Activated CD4-positive, alpha-beta T cell treated with anti-CD3 and anti-CD28 coated beads for 36 hours (primary cell): ENCODE measurements at regions of chr12 and their contacts with region 1.

Region 1: GRCh38 chr12:107760809-107761501 is at the start of gene PRDM4:
- DNase-seq: peak; percentile 95
- ATAC-seq: peak; percentile 93
- H3K4me3 Mint-ChIP-seq: peak within 1 kb of the TSS; percentile 92
- H3K27ac Mint-ChIP-seq: peak within 1 kb of the TSS; percentile 91
- H3K4me1 Mint-ChIP-seq: peaks cover 27% of the 10 kb centered on the region
- H3K27me3 Mint-ChIP-seq: no peaks in the 10 kb centered on the region
- total RNA-seq, gene PRDM4: 27.5 to 29.7 TPM

Region 2: DNA sequence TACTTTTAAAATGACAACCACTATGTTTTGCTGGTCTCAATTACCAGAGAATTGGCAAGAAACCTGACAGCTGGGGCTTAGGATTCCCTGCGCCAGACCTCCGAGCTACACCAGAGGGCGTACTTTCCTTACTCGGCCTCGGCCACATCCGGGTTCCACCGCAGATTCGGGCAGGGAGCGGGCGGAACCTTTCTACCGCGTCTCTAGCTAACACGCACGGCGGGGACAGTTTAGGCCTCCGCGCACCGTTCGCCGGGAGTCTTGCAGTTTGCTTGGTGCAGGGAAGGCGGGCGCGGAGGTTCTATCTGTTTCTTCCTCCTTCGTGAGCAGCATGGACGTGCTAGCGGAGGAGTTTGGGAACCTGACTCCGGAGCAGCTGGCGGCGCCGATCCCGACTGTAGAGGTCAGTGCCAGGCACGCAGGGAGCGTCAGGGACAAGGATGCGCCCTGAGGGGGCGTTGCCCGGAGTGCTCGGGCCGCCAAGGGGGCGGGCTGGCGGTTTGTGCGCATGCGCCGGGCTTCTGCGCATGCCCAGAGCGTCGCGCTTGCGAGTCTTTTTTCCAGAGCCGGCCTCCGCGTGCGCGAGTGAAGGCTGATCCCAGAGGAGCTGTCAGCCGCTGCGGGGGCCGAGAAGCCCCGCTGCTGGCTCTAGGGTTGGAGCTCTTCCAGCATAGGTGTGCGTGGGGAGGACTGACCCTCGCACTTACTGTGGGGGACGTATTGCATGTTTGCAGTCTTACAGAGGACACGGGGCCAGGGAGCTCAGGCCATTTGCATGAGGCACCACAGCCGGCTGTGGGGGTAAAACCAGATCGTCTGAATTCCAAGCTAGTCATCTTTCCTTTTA is 1403.2 kb before region 1 on chr12 and contains the start of gene POLR3B:
- CTCF ChIA-PET with region 1: no interaction called
- POLR2A ChIA-PET with region 1: no interaction called
- intact Hi-C with region 1: loop called in 1 of 2 experiments (anchors 5 kb)
- DNase-seq: peak; percentile 98
- ATAC-seq: peak; percentile 95
- H3K4me3 Mint-ChIP-seq: peak within 1 kb of the TSS; percentile 92
- H3K27ac Mint-ChIP-seq: peak within 1 kb of the TSS; percentile 92
- H3K4me1 Mint-ChIP-seq: peaks cover 14% of the 10 kb centered on the region
- H3K27me3 Mint-ChIP-seq: no peaks in the 10 kb centered on the region
- total RNA-seq, gene POLR3B: 9.1 to 11.7 TPM

Region 3: DNA sequence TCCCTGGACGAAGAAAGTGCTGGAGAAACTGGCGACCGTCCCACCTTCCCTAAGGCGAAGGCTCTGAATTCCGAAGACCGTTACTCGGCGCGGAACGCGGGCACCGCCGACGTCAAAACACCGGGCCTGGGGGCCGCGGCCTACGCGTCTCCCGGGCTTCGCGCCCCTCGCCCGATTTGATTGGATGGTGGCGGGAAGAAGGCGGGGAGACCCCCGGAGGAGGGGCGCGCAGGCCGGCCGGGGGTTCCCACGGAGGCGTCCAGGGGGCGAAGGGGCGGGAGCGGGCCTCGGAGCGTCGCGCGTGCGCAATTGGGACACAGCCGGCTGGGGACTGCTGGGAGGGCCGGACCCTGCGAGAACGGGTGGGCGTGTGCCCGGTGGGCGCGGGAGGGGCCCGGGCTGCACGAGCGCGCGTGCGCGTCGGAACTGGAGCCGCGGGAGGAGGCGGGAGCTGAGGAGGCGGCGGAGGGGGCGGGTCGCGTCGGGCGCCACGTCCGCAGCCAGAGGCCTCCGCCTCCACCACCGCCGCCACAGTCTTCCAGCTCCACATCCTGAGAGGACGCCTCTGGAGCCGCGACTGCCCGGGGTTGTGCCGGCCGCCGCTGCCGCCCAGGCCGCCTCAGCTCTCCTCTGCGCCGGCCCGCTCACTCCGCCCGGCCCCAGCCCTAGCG is 805.4 kb before region 1 on chr12 and contains the start of gene TMEM263:
- CTCF ChIA-PET with region 1: no interaction called
- POLR2A ChIA-PET with region 1: no interaction called
- intact Hi-C with region 1: loop called in 1 of 2 experiments (anchors 1 kb)
- DNase-seq: peak; percentile 94
- ATAC-seq: peak; percentile 81
- H3K4me3 Mint-ChIP-seq: peak within 1 kb of the TSS; percentile 100
- H3K27ac Mint-ChIP-seq: peak within 1 kb of the TSS; percentile 98
- H3K4me1 Mint-ChIP-seq: peaks cover 23% of the 10 kb centered on the region
- H3K27me3 Mint-ChIP-seq: no peaks in the 10 kb centered on the region
- total RNA-seq, gene TMEM263: 38.9 to 43.0 TPM

Region 4: DNA sequence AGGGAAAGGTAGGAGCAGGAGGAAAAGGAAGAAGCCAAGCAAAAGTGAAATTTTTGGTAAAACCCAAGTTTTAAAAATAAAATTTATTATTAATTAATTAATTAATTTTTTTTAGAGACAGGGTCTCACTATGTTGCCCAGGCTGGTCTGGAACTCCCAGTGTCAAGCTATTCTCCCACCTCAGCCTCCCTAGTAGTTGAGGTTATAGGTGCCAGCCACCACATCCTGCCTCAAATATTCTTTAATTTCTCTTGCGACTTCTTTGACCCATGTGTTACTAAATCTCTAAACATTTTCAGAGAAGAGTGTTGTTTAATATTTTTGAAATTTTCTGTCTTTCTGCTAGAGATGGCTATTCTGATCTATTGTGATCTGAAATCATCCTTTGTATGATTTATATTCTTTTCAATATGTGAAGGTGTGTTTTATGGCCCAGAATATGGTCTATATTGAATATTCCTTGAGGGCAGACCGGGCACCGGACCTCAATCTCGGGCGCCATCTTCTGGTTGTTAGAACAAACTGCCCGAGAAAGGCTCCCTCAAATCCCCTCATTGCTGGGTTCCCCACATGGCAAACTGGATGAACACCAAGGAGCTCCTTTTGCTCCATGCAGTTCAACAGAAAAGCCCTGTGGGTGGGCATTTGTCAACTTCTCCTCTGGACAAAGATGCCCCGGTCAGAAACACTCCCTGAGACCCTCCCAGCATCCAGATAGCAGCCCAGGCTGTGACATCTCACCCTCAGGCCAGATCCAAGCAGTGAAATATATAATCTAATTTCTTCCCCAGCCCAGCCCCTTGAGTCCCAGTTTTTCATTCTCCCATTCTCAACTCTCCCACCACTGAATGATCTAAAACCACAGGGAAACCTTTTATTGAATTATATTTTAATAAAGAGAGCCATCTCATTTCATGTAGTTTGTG is 124.1 kb after region 1 on chr12:
- CTCF ChIA-PET with region 1: interaction called, 3 read pairs
- POLR2A ChIA-PET with region 1: no interaction called
- intact Hi-C with region 1: loop called (anchors 1 to 2 kb)
- DNase-seq: peak; percentile 71
- ATAC-seq: peak; percentile 76
- H3K4me3 Mint-ChIP-seq: no peak overlapping the region
- H3K27ac Mint-ChIP-seq: no peak overlapping the region
- H3K4me1 Mint-ChIP-seq: no peaks in the 10 kb centered on the region
- H3K27me3 Mint-ChIP-seq: peaks cover 4% of the 10 kb centered on the region

Region 5: GRCh38 chr12:107912421-107913004 is 151.6 kb after region 1 on chr12:
- CTCF ChIA-PET with region 1: interaction called, 12 read pairs
- POLR2A ChIA-PET with region 1: no interaction called
- intact Hi-C with region 1: no loop called
- DNase-seq: peak; percentile 85
- ATAC-seq: peak; percentile 92
- H3K4me3 Mint-ChIP-seq: peak overlapping the region; percentile 64
- H3K27ac Mint-ChIP-seq: no peak overlapping the region
- H3K4me1 Mint-ChIP-seq: peaks cover 3% of the 10 kb centered on the region
- H3K27me3 Mint-ChIP-seq: peaks cover 31% of the 10 kb centered on the region

Region 6: GRCh38 chr12:108270035-108270848 is 509.3 kb after region 1 on chr12:
- CTCF ChIA-PET with region 1: no interaction called
- POLR2A ChIA-PET with region 1: no interaction called
- intact Hi-C with region 1: no loop called
- DNase-seq: no peak
- ATAC-seq: no peak
- H3K4me3 Mint-ChIP-seq: no peak overlapping the region
- H3K27ac Mint-ChIP-seq: no peak overlapping the region
- H3K4me1 Mint-ChIP-seq: no peaks in the 10 kb centered on the region
- H3K27me3 Mint-ChIP-seq: peaks cover 8% of the 10 kb centered on the region

Region 7: DNA sequence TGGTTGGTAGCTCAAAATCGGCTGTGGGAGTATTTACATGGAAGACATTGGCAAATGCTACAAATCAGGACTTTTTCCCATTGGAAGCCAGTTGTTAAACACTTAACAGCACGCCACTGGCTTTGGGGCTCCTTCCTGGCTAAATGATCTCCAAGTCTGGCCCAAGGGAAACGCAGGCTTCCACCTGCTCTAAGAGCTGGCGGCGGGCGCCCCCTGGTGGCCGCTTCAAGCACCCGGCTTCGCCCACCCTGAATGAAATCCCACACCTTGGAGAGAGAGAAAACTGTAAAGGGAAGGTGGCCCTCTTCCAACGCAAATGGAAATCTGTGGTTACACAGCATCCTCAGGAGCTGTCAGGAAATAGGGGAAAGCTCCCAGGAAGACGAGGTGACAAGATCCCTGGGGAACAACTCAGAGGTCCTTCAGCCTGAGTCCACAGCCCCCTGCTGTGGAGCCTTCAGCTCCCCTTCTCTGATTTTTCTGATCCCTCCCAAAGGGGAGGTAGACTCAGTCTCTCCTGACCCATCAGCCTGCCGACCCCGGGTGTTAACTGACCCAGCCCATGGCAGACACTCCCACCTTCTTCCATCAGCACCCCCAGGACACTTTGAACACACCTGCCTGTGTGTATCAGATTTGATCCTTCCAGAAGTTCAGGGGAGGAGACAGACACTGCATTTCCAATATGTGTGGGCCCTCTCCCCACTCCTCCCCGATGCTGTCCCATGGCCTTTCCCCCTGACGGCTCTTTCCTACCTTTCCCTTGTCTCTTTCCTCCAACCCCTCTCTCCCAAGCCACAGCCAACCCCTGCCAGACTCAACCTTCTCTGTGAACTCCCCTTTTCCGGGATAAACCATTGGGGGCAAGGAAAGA is 857.4 kb after region 1 on chr12:
- CTCF ChIA-PET with region 1: no interaction called
- POLR2A ChIA-PET with region 1: no interaction called
- intact Hi-C with region 1: loop called in 1 of 2 experiments (anchors 10 kb)
- DNase-seq: peak; percentile 88
- ATAC-seq: peak; percentile 46
- H3K4me3 Mint-ChIP-seq: no peak overlapping the region
- H3K27ac Mint-ChIP-seq: peak overlapping the region; percentile 62
- H3K4me1 Mint-ChIP-seq: peaks cover 40% of the 10 kb centered on the region
- H3K27me3 Mint-ChIP-seq: no peaks in the 10 kb centered on the region

Region 8: GRCh38 chr12:109154451-109155438 is 1393.8 kb after region 1 on chr12:
- CTCF ChIA-PET with region 1: no interaction called
- POLR2A ChIA-PET with region 1: no interaction called
- intact Hi-C with region 1: loop called in 1 of 2 experiments (anchors 2 kb)
- DNase-seq: peak; percentile 93
- ATAC-seq: peak; percentile 94
- H3K4me3 Mint-ChIP-seq: peak overlapping the region; percentile 82
- H3K27ac Mint-ChIP-seq: peak overlapping the region; percentile 85
- H3K4me1 Mint-ChIP-seq: peaks cover 17% of the 10 kb centered on the region
- H3K27me3 Mint-ChIP-seq: peaks cover 1% of the 10 kb centered on the region